Activated CD4-positive, alpha-beta memory T cell treated with anti-CD3 and anti-CD28 coated beads for 36 hours (primary cell): ENCODE measurements at regions of chr16 and their contacts with region 1.

Region 1: GRCh38 chr16:24858219-24859041 is 12.7 kb downstream of the SLC5A11 start:
- DNase-seq: peak; percentile 67
- H3K4me3 Mint-ChIP-seq: no peak overlapping the region
- H3K27ac Mint-ChIP-seq: no peak overlapping the region
- H3K4me1 Mint-ChIP-seq: no peaks in the 10 kb centered on the region
- H3K27me3 Mint-ChIP-seq: peaks cover 10% of the 10 kb centered on the region

Region 2: GRCh38 chr16:24771132-24771778 is 87.2 kb before region 1 on chr16:
- CTCF ChIA-PET with region 1: no interaction called
- POLR2A ChIA-PET with region 1: no interaction called
- intact Hi-C with region 1: loop called (anchors 5 kb)
- DNase-seq: peak; percentile 35
- H3K4me3 Mint-ChIP-seq: no peak overlapping the region
- H3K27ac Mint-ChIP-seq: no peak overlapping the region
- H3K4me1 Mint-ChIP-seq: peaks cover 46% of the 10 kb centered on the region
- H3K27me3 Mint-ChIP-seq: no peaks in the 10 kb centered on the region

Region 3: GRCh38 chr16:24834459-24835335 is 23.7 kb before region 1 on chr16:
- CTCF ChIA-PET with region 1: no interaction called
- POLR2A ChIA-PET with region 1: no interaction called
- intact Hi-C with region 1: no loop called
- DNase-seq: peak; percentile 38
- H3K4me3 Mint-ChIP-seq: no peak overlapping the region
- H3K27ac Mint-ChIP-seq: no peak overlapping the region
- H3K4me1 Mint-ChIP-seq: no peaks in the 10 kb centered on the region
- H3K27me3 Mint-ChIP-seq: no peaks in the 10 kb centered on the region

Region 4: DNA sequence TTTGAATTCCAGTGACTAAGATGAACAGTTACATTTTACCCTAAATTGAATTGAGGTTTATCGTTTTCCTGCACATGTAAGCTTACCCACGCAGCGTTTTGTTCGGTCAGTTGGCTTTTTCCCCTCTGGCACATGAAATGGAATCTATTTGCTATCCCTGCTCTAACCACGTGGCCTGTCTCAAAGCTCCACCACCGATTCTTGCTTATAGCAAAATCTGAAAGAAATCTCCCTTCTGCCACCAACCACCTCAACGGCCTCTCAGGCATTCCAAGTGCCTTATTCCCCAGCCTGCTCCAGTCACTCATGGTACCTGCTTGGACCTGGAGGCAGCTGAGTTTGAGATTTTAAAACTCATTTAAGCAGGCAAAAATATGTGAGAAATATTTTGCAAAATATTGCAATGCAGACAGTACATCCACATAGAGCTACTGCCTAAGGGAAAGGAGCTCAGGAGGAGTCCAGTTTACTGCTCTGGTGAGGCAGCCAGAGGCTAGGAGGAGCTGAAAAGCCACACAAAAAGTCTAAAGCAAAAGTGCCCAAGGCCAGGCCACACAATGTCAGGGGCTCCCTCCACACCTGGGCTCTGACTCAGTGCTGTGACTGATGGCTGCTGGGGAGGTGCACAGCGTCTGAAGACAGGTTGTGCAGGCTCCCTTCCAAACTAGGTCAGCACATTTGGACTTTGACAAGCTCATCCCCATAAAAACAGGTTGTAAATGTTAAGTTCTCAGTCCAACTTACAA is 130.3 kb after region 1 on chr16:
- CTCF ChIA-PET with region 1: no interaction called
- POLR2A ChIA-PET with region 1: no interaction called
- intact Hi-C with region 1: loop called (anchors 10 kb)
- DNase-seq: peak; percentile 45
- H3K4me3 Mint-ChIP-seq: no peak overlapping the region
- H3K27ac Mint-ChIP-seq: no peak overlapping the region
- H3K4me1 Mint-ChIP-seq: peaks cover 65% of the 10 kb centered on the region
- H3K27me3 Mint-ChIP-seq: no peaks in the 10 kb centered on the region

Region 5: GRCh38 chr16:25270577-25270976 is 412.1 kb after region 1 on chr16:
- CTCF ChIA-PET with region 1: no interaction called
- POLR2A ChIA-PET with region 1: no interaction called
- intact Hi-C with region 1: no loop called
- DNase-seq: no peak
- H3K4me3 Mint-ChIP-seq: no peak overlapping the region
- H3K27ac Mint-ChIP-seq: no peak overlapping the region
- H3K4me1 Mint-ChIP-seq: peaks cover 2% of the 10 kb centered on the region
- H3K27me3 Mint-ChIP-seq: no peaks in the 10 kb centered on the region